HEK293 (cell line): ENCODE measurements at regions of chr19 and their contacts with region 1.

Region 1: DNA sequence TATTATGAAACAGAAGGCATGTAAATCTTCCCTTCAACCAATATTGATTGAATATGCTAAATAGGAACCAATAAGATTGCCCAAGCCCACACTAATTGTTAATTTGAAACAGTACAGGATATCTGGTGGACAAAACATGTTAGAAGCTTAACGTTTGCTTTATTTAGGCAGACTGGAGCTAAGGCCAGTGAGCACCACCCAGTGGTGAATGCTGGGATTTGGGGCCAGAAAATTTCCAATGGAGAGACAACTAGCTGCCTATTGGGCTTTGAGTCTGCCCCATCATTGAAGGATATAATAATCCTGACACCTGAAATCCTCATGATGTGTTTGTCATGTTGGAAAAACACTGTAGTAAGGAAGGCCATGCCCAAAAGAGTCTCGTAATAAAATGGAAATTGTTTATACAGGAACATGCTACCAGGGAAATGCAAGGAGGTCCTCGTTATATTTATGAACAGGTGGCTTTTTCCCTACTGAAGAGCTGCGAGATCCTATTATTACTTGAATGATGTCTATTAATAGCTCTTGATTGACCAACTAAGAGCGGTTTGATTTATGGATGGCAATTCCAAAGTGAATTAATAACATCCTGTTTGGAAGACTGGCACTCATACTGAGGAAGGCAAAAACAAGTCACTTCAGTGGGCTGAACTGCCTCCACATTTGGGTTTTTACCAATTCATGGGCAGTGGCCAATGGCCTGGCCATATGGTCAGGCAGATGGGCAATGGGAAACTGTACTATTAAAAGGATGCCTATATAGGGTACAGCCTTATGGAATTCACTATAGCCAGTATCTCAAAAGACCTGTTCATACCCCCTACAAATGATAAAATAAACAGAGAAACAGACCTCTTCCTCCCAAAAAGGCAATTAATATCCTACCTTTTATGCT is 8.7 kb downstream of the SIGLECL1 start:
- H3K4me3 ChIP-seq: no peak overlapping the region
- H3K27ac ChIP-seq: no peak overlapping the region
- H3K4me1 ChIP-seq: no peaks in the 10 kb centered on the region
- CTCF ChIP-seq: 0 out of 2 replicates have a peak, but pooled peaks have one; percentile 45

Region 2: GRCh38 chr19:51140441-51140840 is 119.2 kb before region 1 on chr19:
- CTCF ChIA-PET with region 1: no interaction called
- POLR2A ChIA-PET with region 1: no interaction called
- H3K4me3 ChIP-seq: no peak overlapping the region
- H3K27ac ChIP-seq: no peak overlapping the region
- H3K4me1 ChIP-seq: no peaks in the 10 kb centered on the region
- CTCF ChIP-seq: no peak

Region 3: DNA sequence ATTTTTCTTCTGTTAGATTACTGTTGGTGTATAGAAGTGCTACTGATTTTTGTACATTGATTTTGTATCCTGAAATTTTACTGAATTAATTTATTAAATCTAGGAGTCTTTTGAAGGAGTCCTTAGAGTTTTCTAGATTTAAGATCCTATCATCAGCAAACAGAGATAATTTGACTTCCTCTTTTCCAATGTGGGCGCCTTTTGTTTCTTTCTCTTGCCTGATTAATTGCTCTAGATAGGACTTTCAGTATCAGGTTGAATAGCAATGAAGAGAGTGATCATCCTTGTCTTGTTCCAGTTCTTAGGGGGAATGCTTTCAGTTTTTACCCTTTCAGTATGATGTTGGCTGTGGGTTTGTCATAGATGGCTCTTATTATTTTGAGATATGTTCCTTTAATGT is 40.3 kb before region 1 on chr19:
- CTCF ChIA-PET with region 1: no interaction called
- POLR2A ChIA-PET with region 1: no interaction called
- H3K4me3 ChIP-seq: no peak overlapping the region
- H3K27ac ChIP-seq: no peak overlapping the region
- H3K4me1 ChIP-seq: no peaks in the 10 kb centered on the region
- CTCF ChIP-seq: no peak

Region 4: GRCh38 chr19:51242881-51243630 is 16.5 kb before region 1 on chr19:
- CTCF ChIA-PET with region 1: interaction called, 13 read pairs
- POLR2A ChIA-PET with region 1: no interaction called
- H3K4me3 ChIP-seq: no peak overlapping the region
- H3K27ac ChIP-seq: no peak overlapping the region
- H3K4me1 ChIP-seq: no peaks in the 10 kb centered on the region
- CTCF ChIP-seq: no peak

Region 5: DNA sequence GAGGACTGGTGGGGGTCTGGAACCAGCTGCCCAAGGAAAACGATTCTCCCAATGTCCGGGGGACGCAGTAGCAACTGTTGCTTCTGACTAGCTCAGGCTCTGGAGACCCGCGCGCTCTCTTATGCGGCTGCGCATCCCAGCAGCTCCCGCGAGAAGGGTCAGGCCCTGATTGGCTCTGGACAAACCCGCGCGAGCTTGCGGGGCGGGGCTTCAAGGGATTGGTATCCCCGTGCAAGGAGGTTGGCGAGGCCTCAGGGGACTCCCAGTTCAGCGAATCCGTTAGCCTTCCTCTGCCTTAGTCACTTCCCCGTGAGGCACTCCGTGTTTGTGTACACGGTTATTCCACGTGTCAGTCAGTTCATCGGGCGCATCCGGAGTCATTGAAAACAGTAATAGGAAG is 11.5 kb after region 1 on chr19:
- CTCF ChIA-PET with region 1: interaction called, 26 read pairs
- POLR2A ChIA-PET with region 1: no interaction called
- H3K4me3 ChIP-seq: no peak overlapping the region
- H3K27ac ChIP-seq: no peak overlapping the region
- H3K4me1 ChIP-seq: no peaks in the 10 kb centered on the region
- CTCF ChIP-seq: no peak